PC-9 (cell line): ENCODE measurements at regions of chr2 and their contacts with region 1.

Region 1: DNA sequence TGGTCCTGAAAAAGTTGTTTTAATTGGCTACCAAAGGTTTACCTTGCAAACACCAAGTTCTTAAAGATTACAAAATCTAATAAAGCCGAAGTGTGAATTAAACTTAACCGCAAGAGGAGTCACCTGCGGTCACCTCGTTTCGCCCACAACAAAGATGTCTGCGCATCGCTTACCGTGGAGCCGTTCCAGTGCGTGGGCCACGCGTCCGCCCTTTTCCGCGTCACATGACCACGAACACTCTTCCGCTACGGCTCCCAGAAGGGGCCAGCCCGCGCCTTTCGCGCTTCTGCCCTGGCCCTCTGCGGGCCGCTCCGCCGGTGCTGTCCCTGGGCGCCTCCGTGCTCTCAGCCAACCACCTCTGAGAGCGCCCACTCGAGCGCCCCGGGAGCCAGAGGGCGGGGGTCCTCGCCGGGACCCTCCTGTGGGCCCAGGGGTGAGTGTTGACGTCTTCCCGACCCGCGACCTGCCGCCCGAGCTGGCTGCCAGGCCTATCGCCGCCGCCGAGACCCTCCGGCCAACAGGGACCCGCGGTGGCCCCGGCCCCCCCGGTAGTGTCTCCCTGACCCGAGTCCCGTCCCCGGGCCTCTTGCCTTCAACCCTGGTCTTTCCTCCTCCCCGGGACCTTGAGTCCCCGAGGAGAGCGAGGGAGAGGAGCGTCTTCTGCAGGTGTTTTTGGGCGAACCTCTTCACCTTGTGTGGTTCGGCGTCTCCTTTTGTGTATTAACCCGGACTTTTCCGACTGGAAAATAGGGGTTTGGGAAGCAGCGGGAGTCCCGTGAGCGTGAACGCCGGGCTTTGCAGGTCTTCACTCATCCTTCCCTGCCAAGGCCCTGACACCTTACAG is at the start of gene MFF:
- DNase-seq: peak; percentile 80 to 86
- H3K4me3 ChIP-seq: peak within 1 kb of the TSS; percentile 98
- H3K27ac ChIP-seq: peak within 1 kb of the TSS; percentile 83
- H3K4me1 ChIP-seq: peaks cover 25% of the 10 kb centered on the region
- H3K27me3 ChIP-seq: no peaks in the 10 kb centered on the region
- CTCF ChIP-seq: peak; percentile 43; the same call in 1 of the 2 replicates
- total RNA-seq, gene MFF: 141 and 144 TPM in 2 replicates

Region 2: GRCh38 chr2:227132986-227133385 is 192.2 kb before region 1 on chr2:
- CTCF ChIA-PET with region 1: no interaction called
- POLR2A ChIA-PET with region 1: no interaction called
- intact Hi-C with region 1: loop called (anchors 5 kb)
- DNase-seq: no peak
- H3K4me3 ChIP-seq: no peak overlapping the region
- H3K27ac ChIP-seq: no peak overlapping the region
- H3K4me1 ChIP-seq: no peaks in the 10 kb centered on the region
- H3K27me3 ChIP-seq: no peaks in the 10 kb centered on the region
- CTCF ChIP-seq: no peak

Region 3: DNA sequence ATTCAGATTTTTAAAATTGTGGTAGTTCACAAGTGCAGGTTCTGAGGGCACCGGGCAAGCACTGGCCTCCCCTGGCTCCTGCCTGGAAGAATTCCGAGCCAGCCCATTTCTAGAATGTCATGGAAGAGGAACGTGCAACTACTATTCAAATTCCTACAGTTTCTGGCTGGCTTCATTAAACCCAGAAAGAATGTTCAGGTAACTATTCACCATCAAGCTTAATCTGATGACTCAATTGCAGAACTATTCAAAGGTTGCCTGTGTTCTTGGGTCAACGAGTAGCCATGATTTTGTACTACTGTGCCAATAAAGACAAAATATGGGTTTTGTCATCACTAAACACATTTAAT is 14.5 kb before region 1 on chr2:
- CTCF ChIA-PET with region 1: no interaction called
- POLR2A ChIA-PET with region 1: no interaction called
- intact Hi-C with region 1: loop called (anchors 1 kb)
- DNase-seq: peak; percentile 57 to 68
- H3K4me3 ChIP-seq: no peak overlapping the region
- H3K27ac ChIP-seq: no peak overlapping the region
- H3K4me1 ChIP-seq: no peaks in the 10 kb centered on the region
- H3K27me3 ChIP-seq: no peaks in the 10 kb centered on the region
- CTCF ChIP-seq: no peak

Region 4: DNA sequence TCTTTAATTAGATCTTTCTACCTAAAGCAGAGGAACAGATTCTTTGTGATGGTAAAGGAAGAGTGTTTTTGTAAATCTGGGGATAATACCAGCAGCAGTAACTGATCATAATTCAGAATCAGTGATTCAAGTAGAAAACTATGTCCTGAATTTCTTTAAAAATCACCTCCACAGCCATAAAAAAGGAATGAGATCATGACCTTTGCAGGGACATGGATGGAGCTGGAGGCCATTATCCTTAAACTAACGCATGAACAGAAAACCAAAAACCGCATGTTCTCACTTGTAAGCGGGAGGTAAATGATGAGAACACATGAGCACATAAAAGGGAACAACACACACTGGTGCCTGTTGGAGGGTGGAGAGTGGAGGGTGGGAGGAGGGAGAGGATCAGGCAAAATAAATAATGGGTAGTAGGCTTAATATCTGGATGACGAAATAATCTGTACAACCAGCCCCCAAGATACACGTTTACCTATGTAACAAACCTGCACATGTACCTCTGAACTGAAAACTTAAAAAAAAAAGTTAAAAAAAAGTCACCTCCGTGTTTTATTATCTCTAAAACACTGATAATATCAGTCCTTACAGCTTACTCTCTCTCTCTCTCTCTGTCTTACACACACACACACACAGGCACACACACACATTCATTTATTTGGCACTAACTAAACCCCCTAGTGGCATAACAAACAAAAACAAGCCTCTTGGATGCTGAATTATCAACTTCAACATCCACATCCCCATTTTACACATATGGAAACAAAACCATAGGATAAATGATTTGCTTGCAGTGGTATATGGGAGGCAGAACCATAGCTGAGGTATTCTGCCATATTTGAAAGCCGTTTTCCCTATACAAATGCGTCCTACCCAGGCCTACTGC is 52.5 kb after region 1 on chr2:
- CTCF ChIA-PET with region 1: interaction called, 13 read pairs
- POLR2A ChIA-PET with region 1: interaction called, 3 read pairs
- intact Hi-C with region 1: no loop called
- DNase-seq: no peak
- H3K4me3 ChIP-seq: no peak overlapping the region
- H3K27ac ChIP-seq: peak overlapping the region; percentile 70
- H3K4me1 ChIP-seq: peaks cover 17% of the 10 kb centered on the region; the same call in 1 of the 2 replicates
- H3K27me3 ChIP-seq: no peaks in the 10 kb centered on the region
- CTCF ChIP-seq: 0 out of 2 replicates have a peak, but pooled peaks have one; percentile 24